Right ventricle myocardium inferior (tissue), 1 donor: ENCODE measurements at regions of chr10 and their contacts with region 1.

Region 1: DNA sequence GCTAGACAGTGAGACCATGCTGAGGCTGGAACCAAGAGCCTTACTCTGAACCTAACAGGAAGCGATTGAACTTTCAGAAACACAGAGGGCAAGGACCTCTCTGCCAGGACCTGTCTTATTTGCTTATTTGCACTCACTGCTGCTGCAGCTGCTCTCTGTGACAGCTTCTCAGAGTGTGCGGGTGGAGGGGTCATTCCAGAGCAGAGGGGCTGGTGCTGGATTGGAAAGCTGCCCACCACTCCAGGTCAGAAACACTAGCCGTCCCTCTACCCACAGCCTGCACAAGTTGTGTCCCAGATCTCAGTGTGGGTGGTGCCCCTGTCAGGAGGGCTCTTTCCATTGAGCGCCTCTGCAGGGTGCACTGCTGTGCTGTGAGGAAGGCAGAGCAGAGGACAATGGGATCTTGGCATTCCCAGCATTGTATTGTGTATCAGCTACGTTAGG is 126.2 kb downstream of the CCNY start:
- DNase-seq: no peak
- ATAC-seq: peak; percentile 64

Region 2: DNA sequence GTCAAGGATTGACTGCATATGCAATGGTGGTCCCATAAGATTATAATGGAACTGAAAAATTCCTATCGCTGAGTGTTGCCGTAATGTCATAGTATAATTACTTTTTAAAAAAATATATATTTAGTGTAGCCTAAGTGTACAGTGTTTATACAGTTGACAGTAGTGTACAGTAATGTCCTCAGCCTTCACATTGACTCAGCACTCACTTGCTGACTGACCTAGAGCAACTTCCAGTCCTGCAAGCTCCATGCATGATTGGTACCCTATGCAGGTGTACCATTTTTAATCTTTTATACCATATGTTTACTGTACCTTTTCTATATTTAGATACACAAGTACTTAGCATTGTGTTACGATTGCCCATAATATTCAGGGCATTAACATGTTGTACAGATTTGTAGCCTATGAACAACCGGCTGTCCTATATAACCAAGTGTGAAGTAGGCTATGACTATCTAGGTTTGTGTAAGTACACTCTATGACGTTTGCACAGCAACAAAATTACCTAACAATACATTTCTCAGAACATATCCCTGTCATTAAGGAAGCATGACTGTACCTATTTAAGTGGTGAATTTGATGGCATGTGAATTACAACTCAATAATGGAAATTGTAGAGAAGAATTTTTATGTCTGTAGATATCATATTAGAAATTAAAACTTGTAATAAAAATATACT is 85.3 kb before region 1 on chr10:
- intact Hi-C with region 1: no loop called
- DNase-seq: no peak
- ATAC-seq: no peak

Region 3: GRCh38 chr10:35387768-35388167 is 74.7 kb before region 1 on chr10:
- intact Hi-C with region 1: loop called (anchors 5 kb)
- DNase-seq: no peak
- ATAC-seq: no peak

Region 4: GRCh38 chr10:35480142-35480541 is 17.6 kb after region 1 on chr10:
- intact Hi-C with region 1: no loop called
- DNase-seq: no peak
- ATAC-seq: no peak